ENCODE measurements at regions of chr2 and their contacts with region 1.

Region 1: GRCh38 chr2:36785179-36785795 is 88.8 kb downstream of the VIT start:
- DNase-seq: peak; percentile 71
- ATAC-seq: peak; percentile 78
- H3K4me3 Mint-ChIP-seq: peak overlapping the region; percentile 39; the same call in 1 of the 2 replicates
- H3K27ac Mint-ChIP-seq: peak overlapping the region; percentile 41; the same call in 1 of the 2 replicates
- H3K4me1 Mint-ChIP-seq: peaks cover 67% of the 10 kb centered on the region
- H3K27me3 Mint-ChIP-seq: no peaks in the 10 kb centered on the region; the same call in 1 of the 2 replicates
- CTCF ChIP-seq: peak; percentile 98

Region 2: GRCh38 chr2:36695746-36696415 is 89.4 kb before region 1 on chr2:
- CTCF ChIA-PET with region 1: interaction called, 15 read pairs
- POLR2A ChIA-PET with region 1: no interaction called
- DNase-seq: no peak
- ATAC-seq: peak; percentile 92
- H3K4me3 Mint-ChIP-seq: no peak overlapping the region
- H3K27ac Mint-ChIP-seq: no peak overlapping the region
- H3K4me1 Mint-ChIP-seq: peaks cover 19% of the 10 kb centered on the region
- H3K27me3 Mint-ChIP-seq: no peaks in the 10 kb centered on the region
- CTCF ChIP-seq: no peak

Region 3: DNA sequence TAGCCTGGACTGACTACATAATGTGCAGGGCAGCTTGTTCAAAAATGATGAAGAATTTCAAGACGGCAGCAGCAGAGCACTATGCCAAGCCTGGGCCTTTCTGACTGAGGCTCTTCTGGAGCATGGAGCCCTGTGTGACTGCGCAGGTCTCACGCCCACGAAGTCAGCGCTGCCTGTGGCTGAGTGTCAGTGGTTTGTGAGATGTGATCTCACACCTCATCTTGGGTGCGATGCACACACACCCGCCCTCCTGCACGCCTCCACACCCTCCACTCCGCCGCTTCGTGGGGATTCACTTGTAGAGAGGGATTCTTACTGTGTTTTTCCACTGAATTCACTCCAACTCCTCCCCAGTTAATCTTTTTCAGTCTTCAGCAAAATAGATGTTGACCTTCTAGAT is 15.1 kb after region 1 on chr2:
- CTCF ChIA-PET with region 1: interaction called, 41 read pairs
- POLR2A ChIA-PET with region 1: no interaction called
- DNase-seq: no peak
- ATAC-seq: no peak
- H3K4me3 Mint-ChIP-seq: no peak overlapping the region
- H3K27ac Mint-ChIP-seq: no peak overlapping the region
- H3K4me1 Mint-ChIP-seq: peaks cover 10% of the 10 kb centered on the region
- H3K27me3 Mint-ChIP-seq: no peaks in the 10 kb centered on the region
- CTCF ChIP-seq: no peak

Region 4: GRCh38 chr2:36820942-36821605 is 35.8 kb after region 1 on chr2:
- CTCF ChIA-PET with region 1: interaction called, 15 read pairs
- POLR2A ChIA-PET with region 1: no interaction called
- DNase-seq: no peak
- ATAC-seq: no peak
- H3K4me3 Mint-ChIP-seq: no peak overlapping the region
- H3K27ac Mint-ChIP-seq: no peak overlapping the region
- H3K4me1 Mint-ChIP-seq: peaks cover 19% of the 10 kb centered on the region
- H3K27me3 Mint-ChIP-seq: no peaks in the 10 kb centered on the region
- CTCF ChIP-seq: no peak

Region 5: DNA sequence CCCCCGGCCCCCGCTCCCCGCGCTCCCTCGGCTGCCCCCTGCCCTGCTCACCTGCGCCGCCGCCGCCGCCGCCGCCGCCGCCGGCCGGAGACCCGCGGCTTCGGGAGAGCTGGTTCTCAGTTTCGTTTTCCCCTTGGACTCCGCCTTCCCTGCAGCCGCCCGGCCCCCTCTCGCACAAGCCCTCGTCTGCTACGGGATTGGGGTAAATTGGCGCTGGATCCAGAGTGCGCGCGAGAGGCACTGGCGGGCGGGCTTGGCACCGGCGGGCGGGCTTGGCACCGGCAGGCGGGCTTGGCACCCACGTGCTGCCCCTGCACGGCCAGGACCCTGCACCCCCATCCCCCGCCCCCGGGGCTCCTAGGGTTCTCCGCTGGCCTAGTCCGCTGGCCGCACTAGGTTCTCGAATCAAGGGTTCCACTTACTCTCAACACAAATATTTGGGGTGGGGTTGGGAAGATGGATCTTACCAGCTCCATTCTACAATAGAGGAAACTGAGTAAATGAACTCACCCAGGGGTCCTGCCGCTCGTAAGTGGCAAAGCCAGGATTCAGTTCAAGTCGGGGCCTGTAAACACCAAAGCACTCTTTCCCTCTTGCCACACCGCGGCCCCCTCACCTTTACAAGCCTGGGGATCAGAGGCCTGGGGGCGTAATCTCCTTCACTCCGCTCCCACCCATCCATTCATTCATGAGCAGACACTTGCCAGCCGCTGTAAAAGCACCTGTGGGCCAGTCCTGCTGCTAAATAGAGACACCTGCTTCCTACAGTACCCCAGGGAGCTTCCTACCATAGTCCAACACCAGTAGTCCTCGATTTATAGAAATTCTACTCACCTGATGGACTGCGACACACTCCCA is 371.8 kb after region 1 on chr2 and contains the start of gene EIF2AK2:
- CTCF ChIA-PET with region 1: no interaction called
- POLR2A ChIA-PET with region 1: no interaction called
- DNase-seq: peak; percentile 87
- ATAC-seq: peak; percentile 94
- H3K4me3 Mint-ChIP-seq: peak within 1 kb of the TSS; percentile 75
- H3K27ac Mint-ChIP-seq: peak within 1 kb of the TSS; percentile 89
- H3K4me1 Mint-ChIP-seq: peaks cover 32% of the 10 kb centered on the region
- H3K27me3 Mint-ChIP-seq: no peaks in the 10 kb centered on the region
- CTCF ChIP-seq: no peak
- total RNA-seq, gene EIF2AK2: 34.2 to 42.3 TPM (median 40.7 TPM) in 3 replicates